ENCODE measurements at regions of chr17 and their contacts with region 1.

Region 1: DNA sequence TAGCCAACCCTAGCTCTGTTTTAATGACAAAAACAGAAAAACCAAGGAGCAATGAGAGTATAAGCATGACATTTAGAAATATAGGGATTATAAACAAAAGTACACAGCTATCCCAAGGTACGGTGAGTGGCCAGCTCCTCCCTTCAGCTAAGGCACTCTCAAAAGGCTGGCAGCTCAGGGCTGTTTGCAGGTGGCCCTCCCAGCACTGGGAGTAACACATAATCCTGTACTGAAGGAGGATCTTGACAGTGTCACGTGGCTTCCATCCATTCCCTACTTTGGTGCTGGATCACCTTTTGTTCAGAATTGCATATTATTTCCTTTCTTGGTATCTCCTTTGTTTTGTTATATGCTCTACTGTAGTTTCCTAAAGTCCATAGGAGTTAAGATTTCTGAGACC is 500.8 kb downstream of the KCNJ18 start:
- DNase-seq: no peak
- H3K4me3 Mint-ChIP-seq: no peak overlapping the region
- H3K27ac Mint-ChIP-seq: no peak overlapping the region
- H3K4me1 Mint-ChIP-seq: no peaks in the 10 kb centered on the region
- H3K27me3 Mint-ChIP-seq: no peaks in the 10 kb centered on the region

Region 2: DNA sequence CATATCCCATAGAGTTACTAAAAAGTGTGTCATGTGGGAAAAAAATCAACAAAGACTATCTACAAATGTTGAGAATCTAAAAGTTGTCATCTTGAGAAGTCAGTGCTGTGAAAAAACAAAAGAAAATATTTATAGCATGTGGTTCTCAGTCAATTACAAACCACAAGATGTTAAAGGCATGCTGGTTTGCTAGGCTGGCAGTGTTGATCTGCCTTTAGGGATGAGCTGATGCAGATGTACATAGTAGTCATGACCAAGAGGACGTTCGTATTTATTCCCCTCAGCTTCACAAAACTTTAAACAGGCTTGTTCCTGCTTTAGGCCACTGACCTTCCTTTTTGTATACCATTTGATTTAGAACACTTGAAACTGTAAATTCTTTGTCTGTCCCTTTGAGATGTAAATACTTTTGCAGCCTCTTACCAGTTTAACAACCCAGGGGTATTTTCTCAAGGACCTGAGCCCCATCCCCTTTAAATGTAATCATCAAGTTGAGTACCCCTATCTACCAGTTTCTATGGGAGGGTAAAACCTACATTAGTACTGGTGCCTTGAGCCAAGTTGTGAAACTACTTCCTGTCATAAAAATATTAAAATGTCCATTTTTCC is 54.1 kb before region 1 on chr17:
- intact Hi-C with region 1: no loop called
- DNase-seq: no peak
- H3K4me3 Mint-ChIP-seq: no peak overlapping the region
- H3K27ac Mint-ChIP-seq: no peak overlapping the region
- H3K4me1 Mint-ChIP-seq: no peaks in the 10 kb centered on the region
- H3K27me3 Mint-ChIP-seq: no peaks in the 10 kb centered on the region

Region 3: GRCh38 chr17:22242472-22242871 is 49.4 kb after region 1 on chr17:
- intact Hi-C with region 1: loop called (anchors 10 kb)
- DNase-seq: no peak
- H3K4me3 Mint-ChIP-seq: no peak overlapping the region
- H3K27ac Mint-ChIP-seq: no peak overlapping the region
- H3K4me1 Mint-ChIP-seq: no peaks in the 10 kb centered on the region
- H3K27me3 Mint-ChIP-seq: no peaks in the 10 kb centered on the region

Region 4: DNA sequence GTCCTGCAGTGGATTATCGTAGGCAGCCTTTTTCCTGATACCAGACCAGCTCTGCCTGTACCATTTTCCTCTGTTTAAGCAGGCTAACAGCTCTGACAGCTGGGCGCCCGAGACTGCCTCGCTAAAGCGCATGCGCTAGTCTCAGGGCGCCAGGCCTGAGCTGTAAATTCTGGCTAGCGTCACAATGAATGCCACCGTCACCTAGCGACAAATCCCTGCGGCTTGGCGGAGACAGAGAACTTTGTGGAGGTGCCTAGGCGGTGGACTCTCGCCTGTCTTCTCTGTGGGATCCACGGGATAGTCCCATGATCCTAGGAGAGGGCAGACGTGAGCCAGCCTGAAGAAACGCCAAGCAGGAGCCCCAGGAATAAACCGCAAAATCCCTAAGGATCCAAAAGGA is 73.1 kb after region 1 on chr17:
- intact Hi-C with region 1: no loop called
- DNase-seq: no peak
- H3K4me3 Mint-ChIP-seq: no peak overlapping the region
- H3K27ac Mint-ChIP-seq: no peak overlapping the region
- H3K4me1 Mint-ChIP-seq: no peaks in the 10 kb centered on the region
- H3K27me3 Mint-ChIP-seq: no peaks in the 10 kb centered on the region